ENCODE measurements at regions of chrX and their contacts with region 1.

Region 1: DNA sequence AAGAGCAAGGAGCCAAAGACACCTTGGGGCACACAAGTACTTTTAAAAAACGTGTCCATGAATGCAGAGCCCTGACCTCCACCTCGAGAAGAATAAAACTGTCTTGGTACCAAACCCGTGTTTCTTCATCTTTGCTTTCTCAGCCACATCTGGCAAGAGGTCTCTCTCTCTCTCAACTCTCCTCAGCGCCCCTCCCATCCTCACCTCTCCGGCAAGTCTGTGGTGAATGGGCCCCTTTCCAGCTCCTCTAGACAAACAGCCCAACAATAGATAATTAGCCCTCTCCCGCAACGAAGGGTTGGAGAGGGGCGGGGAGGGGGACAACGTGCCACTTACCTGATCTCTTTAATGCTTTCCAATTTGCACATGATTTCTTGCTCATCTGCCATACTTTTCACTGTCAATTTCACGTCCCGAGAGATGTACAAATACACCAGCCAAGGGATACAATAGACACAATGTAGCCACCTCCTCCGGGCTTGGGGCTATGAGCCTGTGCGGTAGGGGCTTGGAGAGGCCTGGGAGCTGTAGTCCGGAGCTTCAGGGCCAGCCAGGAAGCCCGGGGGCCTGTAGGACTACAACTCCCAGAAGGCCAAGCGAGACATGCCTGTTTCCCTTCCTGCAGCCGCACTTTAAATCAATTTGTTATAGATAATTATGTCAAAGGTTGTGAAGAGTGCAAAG is at the start of gene ZC4H2:
- DNase-seq: peak; percentile 80
- ATAC-seq: peak; percentile 99 to 100
- total RNA-seq, gene ZC4H2: 6.8 to 10.1 TPM

Region 2: GRCh38 chrX:65034668-65035445 is 58.7 kb after region 1 on chrX:
- intact Hi-C with region 1: loop called in 1 of 2 experiments (anchors 10 kb)
- DNase-seq: peak; percentile 78
- ATAC-seq: peak; percentile 96 to 99

Region 3: GRCh38 chrX:65463550-65463949 is 487.4 kb after region 1 on chrX:
- intact Hi-C with region 1: no loop called
- DNase-seq: no peak
- ATAC-seq: no peak